SK-N-SH (cell line): ENCODE measurements at regions of chr12 and their contacts with region 1.

Region 1: GRCh38 chr12:7933255-7933729 is 2.7 kb downstream of the SLC2A3 start:
- DNase-seq: peak; percentile 75
- H3K4me3 ChIP-seq: peak overlapping the region; percentile 53 to 74; a peak in 3 of 4 replicates
- H3K27ac ChIP-seq: peak overlapping the region in 1 of 2 experiments; percentile 83; a peak in 2 of 4 replicates
- H3K4me1 ChIP-seq: peaks cover 0 to 7% of the 10 kb centered on the region in 2 experiments; a peak in 1 of 4 replicates
- H3K27me3 ChIP-seq: no peaks in the 10 kb centered on the region
- CTCF ChIP-seq: peak; percentile 87
- EP300 ChIP-seq: no peak
- RAD21 ChIP-seq: peak; percentile 69

Region 2: GRCh38 chr12:7959701-7960121 is 26.4 kb after region 1 on chr12:
- CTCF ChIA-PET with region 1: interaction called, 11 read pairs
- POLR2A ChIA-PET with region 1: no interaction called
- DNase-seq: no peak
- H3K4me3 ChIP-seq: no peak overlapping the region
- H3K27ac ChIP-seq: no peak overlapping the region
- H3K4me1 ChIP-seq: peaks cover 0 to 6% of the 10 kb centered on the region in 2 experiments; a peak in 1 of 4 replicates
- H3K27me3 ChIP-seq: no peaks in the 10 kb centered on the region
- CTCF ChIP-seq: no peak
- EP300 ChIP-seq: no peak
- RAD21 ChIP-seq: no peak

Region 3: DNA sequence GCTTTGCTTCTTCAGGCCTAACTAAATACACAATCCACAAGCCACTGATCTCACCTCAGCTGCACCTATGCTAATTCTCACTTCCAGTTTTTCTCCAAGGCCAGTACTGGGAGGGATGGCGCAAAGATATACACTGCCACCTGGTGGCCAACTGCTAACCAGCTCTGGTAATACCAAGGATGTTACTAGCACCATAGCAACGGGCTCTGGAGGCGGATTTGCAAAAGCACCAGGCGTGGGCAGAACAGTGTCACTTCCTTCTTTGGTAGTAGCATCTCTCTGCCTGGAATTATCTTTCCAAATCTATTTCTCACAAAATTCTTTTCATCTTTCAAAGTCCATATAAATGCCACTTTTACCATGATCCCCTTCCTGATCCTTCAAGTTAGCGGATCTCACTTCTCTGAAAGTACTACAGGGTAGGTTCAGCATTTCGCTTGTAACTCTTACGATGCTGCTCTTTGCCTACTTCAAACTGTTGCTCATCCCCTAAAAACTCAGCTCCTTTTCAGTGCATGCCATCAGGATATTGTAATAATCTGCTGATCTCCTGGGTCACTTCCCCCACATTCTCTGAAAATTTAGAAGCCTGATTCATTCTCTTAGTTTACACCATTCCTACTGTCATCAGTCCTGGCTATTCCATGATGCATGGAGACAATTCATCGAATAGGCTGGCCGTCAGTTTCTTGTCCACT is 62.1 kb after region 1 on chr12:
- CTCF ChIA-PET with region 1: interaction called, 29 read pairs
- POLR2A ChIA-PET with region 1: no interaction called
- DNase-seq: peak; percentile 54
- H3K4me3 ChIP-seq: peak overlapping the region in 1 of 2 experiments; percentile 15; a peak in 2 of 4 replicates
- H3K27ac ChIP-seq: peak overlapping the region in 1 of 2 experiments; percentile 88; a peak in 2 of 4 replicates
- H3K4me1 ChIP-seq: peaks cover 0 to 10% of the 10 kb centered on the region in 2 experiments; a peak in 1 of 4 replicates
- H3K27me3 ChIP-seq: no peaks in the 10 kb centered on the region; the same call in 1 of the 2 replicates
- CTCF ChIP-seq: peak; percentile 87
- EP300 ChIP-seq: no peak; a peak in 1 of 4 replicates
- RAD21 ChIP-seq: peak; percentile 72